ENCODE measurements at regions of chr5 and their contacts with region 1.

Region 1: DNA sequence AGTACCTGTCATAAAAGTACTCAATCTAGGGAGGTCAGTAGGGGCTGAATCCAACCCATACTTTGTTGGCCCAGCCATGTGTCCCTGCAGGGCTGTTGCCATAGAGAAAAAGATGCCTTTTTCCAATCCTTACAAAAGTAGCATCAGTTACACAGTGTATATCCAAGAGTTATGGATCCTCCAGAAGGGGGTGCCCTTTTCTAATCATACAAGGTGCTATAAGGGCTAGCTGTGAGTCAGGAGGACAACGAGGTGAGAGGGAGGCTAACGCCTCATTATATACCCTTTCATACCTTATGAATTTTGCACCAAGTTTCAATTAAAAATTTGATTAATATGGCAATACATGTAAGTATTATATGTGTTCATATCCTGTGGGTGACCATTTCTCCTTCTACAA is 4.8 kb downstream of the KIAA0825 start:
- DNase-seq: peak in 1 of 2 experiments; percentile 35
- H3K4me3 ChIP-seq: no peak overlapping the region
- H3K4me3 Mint-ChIP-seq: no peak overlapping the region
- H3K27ac Mint-ChIP-seq: no peak overlapping the region
- H3K4me1 ChIP-seq: peaks cover 10% of the 10 kb centered on the region; the same call in 1 of the 2 replicates
- H3K4me1 Mint-ChIP-seq: no peaks in the 10 kb centered on the region
- H3K27me3 ChIP-seq: no peaks in the 10 kb centered on the region
- H3K27me3 Mint-ChIP-seq: no peaks in the 10 kb centered on the region
- CTCF ChIP-seq: peak in 1 of 2 experiments; percentile 33

Region 2: DNA sequence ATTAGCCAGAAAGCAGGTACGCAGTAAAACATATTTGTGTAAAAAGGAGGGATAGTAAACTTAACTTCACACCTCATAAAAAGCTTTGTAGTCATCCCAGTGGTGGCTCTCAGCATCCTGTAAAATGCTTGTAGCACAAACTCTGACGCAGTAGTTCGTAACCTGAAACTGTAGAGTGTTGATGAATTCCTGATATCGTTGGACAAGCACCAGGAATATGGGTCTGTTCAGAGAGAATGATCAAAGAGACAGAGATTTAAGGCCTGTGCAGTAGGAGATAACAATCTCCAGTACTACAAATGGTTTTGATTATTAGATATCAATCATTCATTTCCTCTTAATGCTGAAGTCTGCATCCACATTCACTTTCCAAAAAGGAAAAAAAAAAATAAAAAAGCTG is 143.7 kb before region 1 on chr5:
- CTCF ChIA-PET with region 1: no interaction called
- POLR2A ChIA-PET with region 1: no interaction called
- intact Hi-C with region 1: no loop called
- DNase-seq: no peak
- H3K4me3 ChIP-seq: no peak overlapping the region
- H3K4me3 Mint-ChIP-seq: no peak overlapping the region
- H3K27ac Mint-ChIP-seq: no peak overlapping the region
- H3K4me1 ChIP-seq: no peaks in the 10 kb centered on the region
- H3K4me1 Mint-ChIP-seq: no peaks in the 10 kb centered on the region
- H3K27me3 ChIP-seq: no peaks in the 10 kb centered on the region
- H3K27me3 Mint-ChIP-seq: no peaks in the 10 kb centered on the region
- CTCF ChIP-seq: no peak

Region 3: DNA sequence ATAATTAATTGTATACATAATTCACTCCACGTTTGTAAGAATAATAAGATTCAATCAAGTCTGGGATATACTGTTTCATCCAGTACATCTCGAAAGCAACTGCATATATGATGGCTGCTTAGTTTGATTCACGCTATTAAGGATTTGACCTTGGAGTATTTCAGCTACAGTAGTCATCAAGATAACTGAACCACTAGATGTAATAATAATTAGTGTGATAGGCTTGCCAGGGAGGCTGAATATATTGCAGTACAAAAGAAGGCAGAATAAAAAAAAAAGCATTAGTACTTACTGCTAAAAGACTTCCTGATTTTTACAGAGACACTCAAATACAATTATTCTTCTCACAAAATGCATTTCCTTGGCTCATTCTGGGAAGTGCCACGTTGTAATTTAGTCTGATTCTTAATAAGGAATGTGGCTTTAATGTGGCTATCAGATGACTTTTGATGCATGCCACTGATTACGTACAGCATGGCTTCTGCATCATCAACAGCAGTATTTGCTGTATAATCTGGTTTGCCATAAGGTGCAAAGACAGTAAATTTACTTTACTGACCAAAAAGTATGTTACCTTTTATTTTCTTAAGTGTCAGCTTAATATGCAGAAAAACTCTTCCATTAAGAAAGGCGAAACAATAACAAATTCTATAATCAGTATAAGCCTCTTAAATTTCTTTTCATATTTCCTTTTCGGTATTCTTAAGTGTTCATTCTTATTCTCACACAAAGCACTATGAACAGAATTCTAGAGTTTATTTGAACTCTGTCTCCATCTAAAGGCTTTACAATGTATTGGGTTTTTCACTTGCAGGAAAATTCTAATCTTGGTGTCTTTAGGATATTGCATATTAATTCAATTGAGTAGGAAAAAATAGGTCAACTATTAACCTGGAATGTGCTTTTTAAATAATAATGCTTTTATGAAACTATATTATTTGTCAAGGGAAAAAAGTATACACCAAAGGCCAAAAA is 171.2 kb after region 1 on chr5:
- CTCF ChIA-PET with region 1: no interaction called
- POLR2A ChIA-PET with region 1: no interaction called
- intact Hi-C with region 1: loop called (anchors 2 kb)
- DNase-seq: no peak
- H3K4me3 ChIP-seq: no peak overlapping the region
- H3K4me3 Mint-ChIP-seq: no peak overlapping the region
- H3K27ac Mint-ChIP-seq: no peak overlapping the region
- H3K4me1 ChIP-seq: no peaks in the 10 kb centered on the region
- H3K4me1 Mint-ChIP-seq: no peaks in the 10 kb centered on the region
- H3K27me3 ChIP-seq: no peaks in the 10 kb centered on the region
- H3K27me3 Mint-ChIP-seq: peaks cover 11% of the 10 kb centered on the region
- CTCF ChIP-seq: peak in 1 of 2 experiments; percentile 21

Measured in Caco-2 (cell line).